Heart right ventricle (tissue), 16 donors: ENCODE measurements at regions of chr18 and their contacts with region 1.

Region 1: DNA sequence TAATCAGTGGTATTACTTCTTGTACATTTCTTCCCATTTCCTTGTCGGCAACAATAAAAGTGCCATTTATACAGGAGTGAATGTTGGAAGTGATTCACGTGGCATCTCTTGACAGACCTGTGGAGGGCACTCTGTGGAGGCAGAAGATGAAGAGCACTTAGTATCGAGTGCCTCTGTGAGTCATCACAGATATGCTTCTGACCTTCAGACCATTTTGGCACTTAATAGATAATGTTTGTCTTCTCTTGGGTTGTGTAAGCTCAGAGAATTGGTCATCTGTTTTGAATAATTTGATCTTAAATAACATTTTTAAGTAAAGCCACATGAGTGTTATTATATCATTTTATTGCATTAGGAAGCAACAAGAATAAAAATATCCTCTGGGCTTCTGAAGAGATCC is 305.5 kb downstream of the PTPRM start:
- DNase-seq: no peak
- ATAC-seq: peak in 7 of 8 donors; percentile 58 to 96 (median 79)
- H3K4me3 ChIP-seq: no peak overlapping the region
- H3K27ac ChIP-seq: no peak overlapping the region
- H3K4me1 ChIP-seq: peaks cover 0 to 42% (median 31%) of the 10 kb centered on the region in 9 donors
- H3K27me3 ChIP-seq: no peaks in the 10 kb centered on the region
- CTCF ChIP-seq: peak in 3 of 9 donors; percentile 19 to 40 (median 37)

Region 2: GRCh38 chr18:7890075-7890474 is 17.5 kb after region 1 on chr18:
- intact Hi-C with region 1: loop called in 1 of 10 experiments (anchors 1 kb)
- DNase-seq: no peak
- ATAC-seq: no peak
- H3K4me3 ChIP-seq: no peak overlapping the region
- H3K27ac ChIP-seq: no peak overlapping the region
- H3K4me1 ChIP-seq: peaks cover 0 to 43% (median 10%) of the 10 kb centered on the region in 9 donors
- H3K27me3 ChIP-seq: no peaks in the 10 kb centered on the region
- CTCF ChIP-seq: no peak

Region 3: DNA sequence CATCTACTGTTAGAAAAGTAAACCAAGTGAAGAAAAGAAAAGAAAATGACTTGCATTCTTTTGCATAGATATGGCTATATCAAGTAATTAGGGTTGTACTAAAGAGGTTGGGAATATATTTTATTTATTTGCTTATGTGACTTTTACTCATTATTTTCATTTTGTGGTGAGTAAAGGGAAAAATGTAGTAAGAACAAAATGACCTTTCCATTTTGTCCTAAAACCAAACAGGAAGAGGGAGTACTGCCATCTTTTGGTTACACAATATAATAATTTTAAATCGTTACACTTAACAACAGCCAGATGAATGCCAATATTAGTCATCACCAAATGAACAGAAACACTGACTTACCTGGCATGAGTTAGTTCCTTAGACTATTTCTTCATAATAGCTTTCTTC is 1182.6 kb after region 1 on chr18:
- intact Hi-C with region 1: no loop called
- DNase-seq: no peak
- ATAC-seq: peak in 4 of 8 donors; percentile 23 to 66 (median 48)
- H3K4me3 ChIP-seq: no peak overlapping the region
- H3K27ac ChIP-seq: no peak overlapping the region
- H3K4me1 ChIP-seq: peaks cover 0 to 11% (median 0%) of the 10 kb centered on the region in 9 donors
- H3K27me3 ChIP-seq: no peaks in the 10 kb centered on the region
- CTCF ChIP-seq: peak in 6 of 9 donors; percentile 18 to 56 (median 44)